A673 (cell line): ENCODE measurements at regions of chr11 and their contacts with region 1.

Region 1: DNA sequence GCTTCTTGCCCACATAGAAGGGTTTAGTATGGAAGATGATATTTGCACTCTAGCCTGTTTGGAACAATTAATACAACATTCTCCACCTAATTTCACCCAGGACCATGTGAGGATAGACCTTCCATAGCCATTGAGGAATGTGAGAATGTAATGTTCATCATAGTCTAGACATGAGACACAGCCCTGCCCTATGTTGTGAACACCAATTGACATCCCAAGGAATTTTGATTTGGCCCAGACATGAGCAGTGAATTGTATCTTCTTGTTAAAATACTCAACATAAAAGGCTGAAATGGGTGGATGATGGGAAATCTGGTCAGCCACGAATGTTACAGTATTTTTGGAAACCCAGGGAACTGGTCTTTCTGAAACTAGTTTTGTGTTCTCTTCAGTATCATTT is 892.3 kb upstream of the CHORDC1 start:
- DNase-seq: no peak
- H3K4me3 ChIP-seq: no peak overlapping the region
- H3K27ac ChIP-seq: no peak overlapping the region
- H3K4me1 ChIP-seq: no peaks in the 10 kb centered on the region
- H3K27me3 ChIP-seq: no peaks in the 10 kb centered on the region
- CTCF ChIP-seq: no peak

Region 2: GRCh38 chr11:90916706-90917105 is 198.4 kb before region 1 on chr11:
- CTCF ChIA-PET with region 1: no interaction called
- POLR2A ChIA-PET with region 1: no interaction called
- intact Hi-C with region 1: no loop called
- DNase-seq: no peak
- H3K4me3 ChIP-seq: no peak overlapping the region
- H3K27ac ChIP-seq: no peak overlapping the region
- H3K4me1 ChIP-seq: peaks cover 20% of the 10 kb centered on the region
- H3K27me3 ChIP-seq: no peaks in the 10 kb centered on the region
- CTCF ChIP-seq: no peak

Region 3: GRCh38 chr11:91041626-91042025 is 73.5 kb before region 1 on chr11:
- CTCF ChIA-PET with region 1: no interaction called
- POLR2A ChIA-PET with region 1: no interaction called
- intact Hi-C with region 1: loop called (anchors 10 kb)
- DNase-seq: peak; percentile 31
- H3K4me3 ChIP-seq: no peak overlapping the region
- H3K27ac ChIP-seq: no peak overlapping the region
- H3K4me1 ChIP-seq: peaks cover 2% of the 10 kb centered on the region
- H3K27me3 ChIP-seq: no peaks in the 10 kb centered on the region
- CTCF ChIP-seq: peak; percentile 56; the same call in 1 of the 2 replicates